GM10248 (cell line): ENCODE measurements at regions of chr16 and their contacts with region 1.

Region 1: GRCh38 chr16:74813109-74813641 is 38.6 kb upstream of the FA2H start:
- DNase-seq: peak; percentile 90
- CTCF ChIP-seq: peak; percentile 90

Region 2: DNA sequence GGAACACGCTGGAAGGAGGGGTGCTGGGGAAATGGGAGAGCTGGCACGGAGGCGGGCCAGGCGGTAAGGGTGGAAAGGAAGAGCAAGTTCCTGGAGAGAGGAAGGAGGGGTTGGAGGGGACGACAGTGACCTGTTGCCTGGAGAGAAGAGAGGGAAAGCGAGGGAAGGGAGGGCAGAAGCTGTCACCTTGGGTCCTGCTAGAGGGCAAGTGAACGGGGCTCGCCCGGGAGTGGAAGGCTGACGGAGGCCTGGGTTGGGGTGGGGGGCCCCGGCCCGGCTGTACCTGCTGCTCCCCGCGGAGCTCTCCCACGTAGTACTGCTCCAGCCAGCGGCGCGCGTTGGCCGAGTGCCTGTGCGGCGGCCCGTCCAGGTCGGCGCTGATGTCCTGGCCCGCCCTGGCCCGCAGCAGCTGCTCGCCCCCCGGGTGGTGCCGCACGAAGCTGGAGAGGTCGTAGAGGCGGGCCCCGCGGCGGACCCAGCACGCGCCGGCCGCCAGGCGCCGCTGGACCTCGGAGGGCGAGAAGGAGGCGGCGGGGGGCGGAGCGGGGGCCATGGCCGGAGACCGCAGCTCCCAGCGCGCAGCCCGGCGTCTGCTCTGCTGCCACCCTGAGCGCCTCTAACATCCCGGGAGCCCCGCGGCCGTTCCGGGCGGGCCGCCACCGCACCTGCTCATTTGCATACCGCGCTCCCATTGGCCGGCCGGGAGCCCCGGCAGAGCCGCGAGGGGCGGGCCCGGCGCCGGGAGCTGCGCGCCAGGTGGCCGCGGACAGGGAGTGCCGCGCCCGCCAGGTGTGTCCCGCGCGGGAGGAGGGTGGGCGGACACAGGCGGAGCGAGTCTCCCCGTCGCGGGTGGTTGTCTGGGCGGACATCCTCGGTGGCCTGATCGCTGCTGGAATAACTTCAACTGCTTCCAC is 38.7 kb before region 1 on chr16 and contains the start of gene FA2H:
- CTCF ChIA-PET with region 1: interaction called, 19 read pairs
- POLR2A ChIA-PET with region 1: no interaction called
- DNase-seq: peak; percentile 91
- CTCF ChIP-seq: peak; percentile 38

Region 3: GRCh38 chr16:74825941-74826542 is 12.9 kb after region 1 on chr16:
- CTCF ChIA-PET with region 1: interaction called, 22 read pairs
- POLR2A ChIA-PET with region 1: no interaction called
- DNase-seq: no peak
- CTCF ChIP-seq: no peak

Region 4: DNA sequence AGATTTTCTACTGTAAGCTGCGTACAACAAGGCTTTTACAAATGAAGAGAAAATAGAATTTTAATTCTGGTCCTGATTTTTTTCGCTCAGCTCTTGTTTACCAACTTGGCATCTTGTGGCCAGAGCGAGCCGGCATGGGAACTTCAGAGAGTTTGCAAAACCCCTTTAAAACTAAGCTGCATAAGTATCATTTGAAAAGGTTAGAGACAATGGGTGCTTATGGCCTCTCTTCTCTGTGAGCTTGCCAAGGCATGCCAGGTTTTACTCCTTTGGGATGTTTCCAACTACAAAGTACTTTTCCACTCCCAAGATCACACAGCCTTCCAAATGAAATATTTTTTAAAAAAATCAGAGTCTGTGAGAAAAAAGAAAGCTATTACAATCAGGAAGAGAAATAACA is 23.9 kb after region 1 on chr16:
- CTCF ChIA-PET with region 1: interaction called, 13 read pairs
- POLR2A ChIA-PET with region 1: no interaction called
- DNase-seq: no peak
- CTCF ChIP-seq: no peak

Region 5: GRCh38 chr16:74954763-74955162 is 141.6 kb after region 1 on chr16:
- CTCF ChIA-PET with region 1: no interaction called
- POLR2A ChIA-PET with region 1: no interaction called
- DNase-seq: no peak
- CTCF ChIP-seq: no peak

Region 6: DNA sequence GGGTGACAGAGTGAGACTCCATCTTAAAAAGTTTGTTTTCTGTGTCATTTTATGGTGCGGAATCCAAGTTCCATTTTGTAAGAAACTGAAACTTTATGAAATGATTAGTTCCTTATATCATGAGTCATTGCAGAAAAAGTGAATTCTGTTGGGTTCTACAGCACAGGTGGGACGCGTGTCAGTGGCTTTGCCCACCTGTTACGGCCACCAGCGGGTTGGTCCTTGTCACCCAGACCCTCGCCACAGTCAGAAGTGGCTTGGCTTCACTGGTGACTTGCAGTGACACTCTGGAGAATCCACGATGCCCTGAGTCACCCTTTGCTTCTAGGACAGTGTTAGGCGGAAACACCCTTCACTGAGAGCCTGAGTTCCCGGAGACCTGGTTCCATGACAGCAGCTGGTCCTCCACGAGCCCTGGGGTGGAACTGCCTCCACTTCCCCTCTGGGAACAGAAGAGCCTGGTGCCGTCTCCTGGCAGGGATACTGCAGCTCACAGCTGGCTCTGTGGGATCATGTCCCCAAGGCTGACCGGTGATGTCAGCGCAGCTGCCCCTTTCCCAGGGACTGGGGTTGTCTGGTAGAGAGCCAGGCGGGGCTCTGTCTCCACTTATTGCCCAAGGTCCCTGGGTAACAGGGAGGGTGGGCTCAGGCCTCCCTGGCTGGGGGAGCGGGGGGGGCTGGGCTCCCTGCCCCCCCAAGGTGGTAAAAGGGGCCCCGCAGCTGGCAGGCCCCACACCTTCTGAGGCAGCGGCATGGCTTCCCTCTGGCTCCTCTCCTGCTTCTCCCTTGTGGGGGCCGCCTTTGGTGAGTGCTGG is 405.3 kb after region 1 on chr16 and contains the start of gene CTRB1:
- CTCF ChIA-PET with region 1: no interaction called
- POLR2A ChIA-PET with region 1: no interaction called
- DNase-seq: peak; percentile 60
- CTCF ChIP-seq: no peak